GM18951 (cell line): ENCODE measurements at regions of chr3 and their contacts with region 1.

Region 1: GRCh38 chr3:131786386-131786785 is 248.4 kb downstream of the CPNE4 start:
- POLR2A ChIP-seq: no peak

Region 2: DNA sequence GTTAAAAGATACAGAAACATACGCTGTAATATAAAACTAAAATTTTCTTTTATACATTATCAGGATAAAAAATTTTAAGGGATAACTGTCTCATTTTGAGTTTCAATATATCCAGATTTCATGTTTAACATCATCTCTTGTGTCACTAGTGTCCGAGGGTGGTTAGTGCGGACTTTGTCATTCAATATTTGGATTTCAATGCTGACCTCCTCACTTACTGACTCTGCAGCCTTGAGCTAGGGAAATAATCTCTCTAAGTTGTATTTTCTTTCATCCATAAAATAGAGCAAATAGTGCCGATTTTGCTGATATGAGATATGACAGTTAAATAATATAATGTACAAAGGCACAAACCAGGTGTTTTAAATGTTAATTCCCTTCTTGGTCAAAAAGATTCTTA is 45.2 kb after region 1 on chr3:
- in situ Hi-C with region 1: no loop called
- POLR2A ChIP-seq: no peak

Region 3: DNA sequence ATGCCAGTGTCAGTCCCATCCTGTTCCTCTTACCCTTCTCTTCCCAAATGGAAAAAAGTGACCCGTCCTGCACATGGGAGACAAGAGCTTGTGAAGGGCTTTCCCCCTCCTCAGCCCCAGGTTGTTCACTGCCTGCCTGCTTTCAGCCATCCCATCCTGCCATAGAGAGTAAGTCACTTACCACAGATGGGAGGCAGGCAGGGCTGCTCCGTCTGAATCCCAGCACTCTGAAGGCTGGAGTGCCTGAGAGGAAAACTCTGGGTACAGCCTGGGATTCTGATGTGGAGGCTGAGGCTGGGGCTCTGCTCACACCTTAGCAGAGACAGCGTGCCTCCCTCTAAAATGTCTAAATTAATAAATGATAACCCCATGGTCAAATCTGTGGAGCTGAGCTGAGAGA is 233.7 kb after region 1 on chr3:
- in situ Hi-C with region 1: loop called (anchors 5 kb)
- POLR2A ChIP-seq: no peak